ENCODE measurements at regions of chr2 and their contacts with region 1.

Region 1: GRCh38 chr2:12716282-12717190 is at the start of gene TRIB2:
- DNase-seq: peak; percentile 90 to 98 (median 97)
- ATAC-seq: peak; percentile 87 to 90
- H3K4me3 ChIP-seq: peak within 1 kb of the TSS; percentile 85
- H3K27ac ChIP-seq: peak within 1 kb of the TSS; percentile 100
- H3K4me1 ChIP-seq: peaks cover 9% of the 10 kb centered on the region
- H3K27me3 ChIP-seq: no peaks in the 10 kb centered on the region
- total RNA-seq, gene TRIB2: 24.7 to 32.2 (median 28.2) TPM

Region 2: DNA sequence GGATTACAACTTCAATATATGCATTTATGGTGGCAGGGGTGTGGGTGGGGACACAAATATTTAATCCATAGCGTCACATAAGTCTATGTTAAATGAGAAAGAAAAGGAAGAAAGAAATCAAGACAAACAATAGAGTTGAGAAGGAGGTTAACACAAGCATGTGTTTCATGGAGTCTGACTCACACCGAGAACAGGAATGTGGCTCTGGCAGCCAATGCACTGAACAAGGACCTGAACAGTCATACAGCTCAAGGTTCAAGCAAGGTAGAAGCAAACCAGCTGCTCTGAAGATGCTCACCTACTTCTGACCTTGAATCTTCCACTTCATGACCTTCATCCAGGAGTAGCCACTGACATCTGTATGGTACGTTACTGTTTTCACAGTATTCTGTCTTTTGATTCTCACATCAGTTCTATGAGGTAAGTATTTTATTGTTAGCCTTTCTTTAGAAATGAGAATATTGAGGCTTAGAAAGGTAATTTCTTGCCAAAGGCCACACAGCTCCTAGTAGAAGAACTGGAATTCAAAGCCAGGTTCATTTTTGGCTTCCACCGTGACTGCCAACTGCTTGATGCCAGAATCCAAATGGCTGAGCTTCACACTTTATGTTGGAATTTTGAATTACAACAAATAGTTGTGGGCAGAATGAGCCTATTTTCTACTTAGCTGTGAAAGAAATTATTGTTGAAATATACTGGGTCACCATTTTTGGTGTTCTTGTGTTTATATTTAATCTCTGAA is 1006.1 kb before region 1 on chr2:
- intact Hi-C with region 1: no loop called
- DNase-seq: no peak
- ATAC-seq: peak; percentile 42 to 71
- H3K4me3 ChIP-seq: no peak overlapping the region
- H3K27ac ChIP-seq: no peak overlapping the region
- H3K4me1 ChIP-seq: no peaks in the 10 kb centered on the region
- H3K27me3 ChIP-seq: no peaks in the 10 kb centered on the region

Region 3: GRCh38 chr2:11829947-11830707 is 886.4 kb before region 1 on chr2:
- intact Hi-C with region 1: loop called in 2 of 4 experiments (anchors 10 kb)
- DNase-seq: peak; percentile 62 to 83 (median 71)
- ATAC-seq: peak; percentile 88 to 92
- H3K4me3 ChIP-seq: peak overlapping the region; percentile 34
- H3K27ac ChIP-seq: peak overlapping the region; percentile 55
- H3K4me1 ChIP-seq: peaks cover 8% of the 10 kb centered on the region
- H3K27me3 ChIP-seq: no peaks in the 10 kb centered on the region

Region 4: GRCh38 chr2:12169721-12170120 is 546.8 kb before region 1 on chr2:
- intact Hi-C with region 1: loop called in 1 of 4 experiments (anchors 5 kb)
- DNase-seq: peak; percentile 57 to 68 (median 60)
- ATAC-seq: peak; percentile 75 to 94
- H3K4me3 ChIP-seq: no peak overlapping the region
- H3K27ac ChIP-seq: no peak overlapping the region
- H3K4me1 ChIP-seq: peaks cover 13% of the 10 kb centered on the region
- H3K27me3 ChIP-seq: no peaks in the 10 kb centered on the region

Region 5: DNA sequence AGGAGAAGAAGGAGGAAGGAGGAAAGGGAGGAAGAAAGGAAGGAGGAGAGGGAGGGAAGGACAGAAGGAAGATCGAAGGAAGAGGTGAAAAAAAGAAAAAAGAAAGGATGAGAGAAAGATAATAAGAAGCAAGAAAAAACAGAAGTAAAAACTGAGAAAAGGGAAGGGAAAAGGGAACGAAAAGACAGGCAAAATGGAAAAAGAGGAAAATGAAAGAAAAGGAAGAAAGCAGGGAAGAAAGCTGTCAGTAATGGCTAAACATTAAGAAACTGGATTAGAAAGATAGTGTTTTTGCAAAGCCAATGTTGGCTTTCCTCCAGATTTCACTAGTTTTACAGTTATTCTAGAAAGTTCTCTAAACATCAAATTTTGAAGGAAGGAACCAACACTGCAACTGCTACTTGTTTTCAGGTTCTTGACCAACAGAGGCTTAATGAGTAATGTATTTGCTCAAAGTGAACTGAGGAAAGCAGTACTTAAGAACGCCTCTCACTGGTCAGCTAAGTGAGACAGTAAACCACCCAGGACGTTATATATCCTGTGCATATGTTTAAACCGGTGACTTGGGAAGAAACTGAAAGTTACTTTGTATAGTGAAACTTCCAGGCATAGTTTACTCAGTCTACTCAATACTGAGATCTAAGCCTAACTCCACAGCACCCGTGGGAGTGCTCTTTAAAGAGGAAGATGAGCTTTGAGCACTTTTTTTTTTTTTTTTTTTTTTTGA is 286.0 kb before region 1 on chr2:
- intact Hi-C with region 1: loop called in 1 of 4 experiments (anchors 10 kb)
- DNase-seq: no peak
- ATAC-seq: no peak
- H3K4me3 ChIP-seq: no peak overlapping the region
- H3K27ac ChIP-seq: no peak overlapping the region
- H3K4me1 ChIP-seq: no peaks in the 10 kb centered on the region
- H3K27me3 ChIP-seq: no peaks in the 10 kb centered on the region

Region 6: DNA sequence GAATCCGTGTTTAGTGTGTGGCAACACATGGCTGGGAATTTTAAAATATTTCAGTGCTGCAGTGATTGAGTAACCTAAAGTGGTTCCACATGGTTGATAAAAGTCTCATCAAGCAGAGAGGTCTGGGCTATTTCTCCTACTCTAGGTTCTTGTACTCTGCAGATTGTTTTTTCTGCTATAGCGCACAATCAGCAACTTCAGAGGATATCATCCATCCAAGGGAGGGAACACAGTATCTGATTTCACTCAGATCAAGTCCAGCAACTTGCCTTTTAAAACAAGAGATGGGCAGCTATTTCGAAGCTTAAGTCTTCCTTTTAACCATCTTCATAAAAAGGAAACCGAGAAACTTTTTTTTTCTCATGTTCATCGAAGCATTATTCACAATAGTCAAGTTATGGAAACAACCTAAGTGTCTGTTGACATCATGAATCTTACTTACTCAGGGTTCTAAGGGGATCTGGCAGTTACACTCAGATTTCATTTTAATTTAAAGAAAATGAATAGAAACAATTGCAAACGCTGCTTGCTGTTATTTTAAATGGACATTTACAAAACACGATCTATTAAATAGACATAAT is 172.5 kb before region 1 on chr2:
- intact Hi-C with region 1: loop called in 1 of 4 experiments (anchors 10 kb)
- DNase-seq: no peak
- ATAC-seq: peak in 1 of 2 donors; percentile 29
- H3K4me3 ChIP-seq: no peak overlapping the region
- H3K27ac ChIP-seq: no peak overlapping the region
- H3K4me1 ChIP-seq: peaks cover 1% of the 10 kb centered on the region
- H3K27me3 ChIP-seq: no peaks in the 10 kb centered on the region

Region 7: DNA sequence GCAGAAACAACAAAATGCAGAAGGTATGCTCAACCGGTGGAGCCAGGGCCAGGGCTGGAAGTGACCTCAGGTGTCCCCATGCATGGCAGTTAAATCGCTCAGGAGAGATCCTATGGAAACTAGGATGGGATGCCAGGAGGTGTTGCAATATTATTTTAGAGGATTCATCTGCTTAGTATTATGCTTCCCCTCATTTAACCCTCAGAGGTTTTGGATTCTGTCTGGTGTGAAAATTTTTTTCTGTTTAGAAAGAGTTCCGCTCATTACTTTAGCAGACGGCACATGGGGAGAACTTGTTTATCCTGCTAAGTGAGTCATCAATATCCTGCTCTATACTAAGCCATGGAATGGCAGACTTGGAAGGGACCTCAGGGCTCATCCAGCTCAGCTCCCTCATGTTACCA is 42.7 kb after region 1 on chr2:
- intact Hi-C with region 1: no loop called
- DNase-seq: no peak
- ATAC-seq: peak in 1 of 2 donors; percentile 56
- H3K4me3 ChIP-seq: no peak overlapping the region
- H3K27ac ChIP-seq: no peak overlapping the region
- H3K4me1 ChIP-seq: no peaks in the 10 kb centered on the region
- H3K27me3 ChIP-seq: no peaks in the 10 kb centered on the region

Region 8: GRCh38 chr2:13000664-13001363 is 284.3 kb after region 1 on chr2:
- intact Hi-C with region 1: loop called (anchors 2 to 10 kb)
- DNase-seq: peak in 1 of 3 donors; percentile 23
- ATAC-seq: peak; percentile 77 to 90
- H3K4me3 ChIP-seq: peak overlapping the region; percentile 0
- H3K27ac ChIP-seq: no peak overlapping the region
- H3K4me1 ChIP-seq: no peaks in the 10 kb centered on the region
- H3K27me3 ChIP-seq: no peaks in the 10 kb centered on the region